Left cardiac atrium (tissue), 4 donors: ENCODE measurements at regions of chr15 and their contacts with region 1.

Region 1: DNA sequence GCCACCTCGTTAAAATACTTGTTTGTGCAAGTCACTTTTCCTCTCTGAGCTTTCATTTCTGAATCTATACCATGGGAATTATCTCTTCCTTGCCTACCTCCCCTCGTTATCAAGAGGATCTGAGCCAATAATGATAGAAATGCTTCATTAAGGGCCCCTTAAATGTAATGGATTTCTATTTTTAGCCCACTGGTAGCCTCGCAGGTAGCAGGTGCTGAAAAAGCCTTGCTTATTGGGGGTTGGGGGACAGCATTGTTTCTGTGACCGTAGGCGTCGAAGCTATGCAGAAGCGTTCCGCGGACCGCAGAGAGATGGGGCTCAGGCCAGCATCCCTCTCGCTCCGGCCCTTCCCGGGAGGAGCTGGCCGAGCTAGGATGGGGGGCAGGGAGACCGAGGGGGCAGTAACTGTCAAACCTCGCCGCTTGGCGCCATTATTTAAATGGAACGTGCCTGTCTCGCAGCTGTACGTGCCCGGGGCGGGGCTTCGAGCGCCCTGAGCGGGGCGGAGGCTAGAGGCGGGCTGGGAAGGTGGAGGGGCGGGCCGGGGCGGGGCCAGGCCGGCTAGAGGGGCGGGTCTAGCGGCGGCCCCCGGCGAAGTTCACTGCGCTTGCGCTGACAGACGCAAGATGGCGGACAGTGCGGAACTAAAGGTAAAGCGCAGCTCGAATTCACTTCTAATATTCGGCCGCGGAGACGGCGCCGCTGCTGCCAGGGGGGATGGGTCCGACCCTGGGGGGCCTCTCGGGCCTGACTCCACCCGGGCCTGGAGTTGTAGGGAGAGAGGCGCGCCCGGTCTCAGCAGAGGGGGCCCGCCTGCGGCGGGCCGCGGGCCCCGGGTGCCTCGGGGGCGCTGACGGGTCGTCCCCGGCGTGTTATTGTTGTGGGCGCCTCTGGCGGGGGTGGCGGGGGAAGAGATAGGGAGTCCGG is at the start of gene PIAS1:
- DNase-seq: peak; percentile 96
- ATAC-seq: peak; percentile 99
- total RNA-seq, gene PIAS1: 27.1 to 31.7 TPM

Region 2: GRCh38 chr15:67863442-67863987 is 190.4 kb before region 1 on chr15:
- intact Hi-C with region 1: loop called in 1 of 2 experiments (anchors 5 kb)
- DNase-seq: peak; percentile 86
- ATAC-seq: peak; percentile 96 to 98

Region 3: GRCh38 chr15:67884514-67885487 is 169.2 kb before region 1 on chr15:
- intact Hi-C with region 1: loop called in 1 of 2 experiments (anchors 10 kb)
- DNase-seq: peak; percentile 87
- ATAC-seq: peak; percentile 93 to 95

Region 4: DNA sequence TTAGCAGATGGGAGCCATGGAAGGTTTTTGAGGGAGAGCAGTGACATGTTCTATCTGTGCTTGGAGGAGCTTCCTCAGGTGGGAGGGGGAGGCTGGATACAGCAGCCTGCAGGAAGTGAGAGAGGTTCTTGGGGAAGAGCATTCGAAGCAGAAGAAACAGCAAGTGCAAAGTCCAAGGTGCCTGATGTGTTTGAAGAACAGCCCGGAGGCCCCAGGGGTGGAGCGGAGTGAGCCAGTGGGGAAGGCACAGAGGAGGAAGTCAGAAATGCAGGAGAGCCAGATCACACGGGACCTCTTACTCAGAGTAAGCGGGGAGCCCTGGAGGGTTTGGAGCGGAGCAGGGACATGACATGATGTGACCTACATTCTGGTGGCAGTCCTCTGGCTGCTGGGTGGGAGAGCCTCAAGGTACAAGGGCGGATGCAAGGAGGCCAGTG is 367.2 kb after region 1 on chr15:
- intact Hi-C with region 1: no loop called
- DNase-seq: no peak
- ATAC-seq: peak in 1 of 2 donors; percentile 16